Breast epithelium (tissue), 4 donors: ENCODE measurements at regions of chr3 and their contacts with region 1.

Region 1: GRCh38 chr3:72625211-72625969 is 222.9 kb downstream of the SHQ1 start:
- DNase-seq: no peak
- H3K4me3 ChIP-seq: no peak overlapping the region
- H3K27ac ChIP-seq: no peak overlapping the region
- H3K4me1 ChIP-seq: no peaks in the 10 kb centered on the region
- H3K27me3 ChIP-seq: no peaks in the 10 kb centered on the region
- CTCF ChIP-seq: no peak
- POLR2A ChIP-seq: no peak

Region 2: GRCh38 chr3:72661115-72661457 is 35.7 kb after region 1 on chr3:
- intact Hi-C with region 1: loop called (anchors 1 kb)
- DNase-seq: peak; percentile 93
- H3K4me3 ChIP-seq: no peak overlapping the region
- H3K27ac ChIP-seq: peak overlapping the region; percentile 49 to 52
- H3K4me1 ChIP-seq: no peaks in the 10 kb centered on the region
- H3K27me3 ChIP-seq: no peaks in the 10 kb centered on the region
- CTCF ChIP-seq: no peak
- POLR2A ChIP-seq: no peak

Region 3: DNA sequence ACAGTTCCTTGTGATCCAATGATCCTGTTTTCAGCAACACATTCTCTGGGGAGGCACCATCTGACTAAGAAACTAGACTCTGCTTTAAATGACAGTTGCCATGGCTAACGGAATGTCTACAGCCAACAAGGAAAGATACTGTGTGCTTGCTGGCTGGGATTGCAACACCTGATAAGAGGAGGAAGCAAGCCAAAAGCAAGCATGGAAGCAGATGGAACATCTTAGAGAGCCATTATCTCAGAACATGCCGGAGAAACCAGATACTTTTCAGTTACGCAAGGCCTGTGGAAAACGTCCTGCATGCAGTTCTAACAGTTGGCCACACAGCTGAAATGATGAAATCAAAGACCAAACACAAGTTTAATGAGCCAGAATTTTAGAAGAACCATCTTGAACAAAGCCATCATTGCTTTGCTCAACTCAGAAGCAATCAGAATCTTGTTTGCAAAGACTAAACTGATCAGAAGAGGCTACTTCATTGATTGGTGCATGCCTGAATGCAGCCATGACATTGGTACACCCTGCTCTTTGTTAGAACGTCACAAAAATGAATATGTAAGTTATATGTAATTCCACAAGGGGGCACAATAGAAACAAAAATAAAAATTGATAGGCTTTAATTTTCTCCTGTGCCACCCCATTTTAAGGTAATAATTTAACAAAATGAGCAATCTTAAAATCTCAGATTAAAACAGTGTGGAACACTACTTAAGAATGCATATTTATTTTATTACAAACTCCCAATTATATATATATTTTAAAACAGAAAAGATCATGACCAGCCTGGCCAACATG is 313.3 kb after region 1 on chr3:
- intact Hi-C with region 1: no loop called
- DNase-seq: peak in 1 of 2 donors; percentile 36
- H3K4me3 ChIP-seq: no peak overlapping the region
- H3K27ac ChIP-seq: peak overlapping the region; percentile 40 to 60
- H3K4me1 ChIP-seq: no peaks in the 10 kb centered on the region
- H3K27me3 ChIP-seq: no peaks in the 10 kb centered on the region
- CTCF ChIP-seq: peak; percentile 66 to 86 (median 82)
- POLR2A ChIP-seq: no peak